Transverse colon (tissue), 4 donors: ENCODE measurements at regions of chr12 and their contacts with region 1.

Region 1: GRCh38 chr12:59403259-59403932 is 192.4 kb upstream of the SLC16A7 start:
- DNase-seq: peak; percentile 21
- H3K4me3 ChIP-seq: no peak overlapping the region
- H3K27ac ChIP-seq: no peak overlapping the region
- H3K4me1 ChIP-seq: peaks cover 0 to 4% (median 0%) of the 10 kb centered on the region in 4 donors
- H3K27me3 ChIP-seq: no peaks in the 10 kb centered on the region
- CTCF ChIP-seq: peak; percentile 44 to 65 (median 61)
- EP300 ChIP-seq: no peak
- POLR2A ChIP-seq: no peak

Region 2: DNA sequence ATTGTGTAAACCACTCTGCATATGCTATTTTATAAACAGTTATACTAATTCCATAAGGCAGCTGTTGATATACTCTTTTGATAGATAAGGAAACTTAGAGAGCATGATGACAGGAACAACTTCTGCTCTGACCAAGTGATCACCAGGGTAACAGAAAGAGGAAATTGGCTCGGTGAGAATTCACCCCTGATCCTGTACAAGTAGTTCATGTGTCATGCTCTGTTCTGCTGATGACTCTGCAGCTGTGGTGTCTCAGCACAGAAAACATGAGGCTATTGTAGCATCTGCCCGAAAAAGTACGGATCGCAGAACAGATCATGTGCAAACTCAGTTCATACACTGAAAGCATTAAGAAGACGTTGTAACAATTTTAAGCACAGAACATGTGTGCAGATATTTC is 828.1 kb before region 1 on chr12:
- in situ Hi-C with region 1: no loop called
- intact Hi-C with region 1: no loop called
- DNase-seq: no peak
- H3K4me3 ChIP-seq: no peak overlapping the region
- H3K27ac ChIP-seq: peak overlapping the region in 1 of 4 donors; percentile 37
- H3K4me1 ChIP-seq: no peaks in the 10 kb centered on the region
- H3K27me3 ChIP-seq: no peaks in the 10 kb centered on the region
- CTCF ChIP-seq: no peak
- EP300 ChIP-seq: no peak
- POLR2A ChIP-seq: no peak

Region 3: DNA sequence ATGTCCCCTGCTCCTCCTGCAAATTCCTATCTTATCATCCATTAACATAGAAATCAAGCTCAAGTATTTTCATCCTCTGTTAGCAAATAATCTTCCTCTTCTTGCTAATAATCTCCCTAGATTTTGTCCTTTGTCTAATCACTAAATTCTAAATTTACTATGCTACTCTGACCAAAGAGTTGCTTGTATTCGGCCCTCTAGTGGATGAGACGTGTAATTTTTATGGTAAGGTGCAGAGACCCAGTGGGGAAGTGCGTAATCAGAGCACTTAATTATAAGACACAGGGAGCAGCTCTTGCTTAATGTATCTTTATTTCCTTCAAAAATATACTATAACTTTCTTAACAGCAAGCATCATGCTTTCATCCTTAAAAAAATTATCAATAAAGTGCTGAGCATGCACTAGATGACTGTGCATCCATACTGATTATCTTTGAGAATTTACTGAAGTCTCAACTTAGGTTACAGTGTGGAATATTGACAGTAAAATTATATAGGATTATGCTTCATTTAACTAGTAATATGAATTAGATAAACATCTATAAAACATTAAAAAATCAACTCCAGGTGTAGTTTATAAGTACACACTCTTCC is 405.0 kb after region 1 on chr12:
- in situ Hi-C with region 1: loop called in 2 of 4 experiments (anchors 10 to 25 kb)
- intact Hi-C with region 1: no loop called
- DNase-seq: no peak
- H3K4me3 ChIP-seq: no peak overlapping the region
- H3K27ac ChIP-seq: no peak overlapping the region
- H3K4me1 ChIP-seq: no peaks in the 10 kb centered on the region
- H3K27me3 ChIP-seq: no peaks in the 10 kb centered on the region
- CTCF ChIP-seq: peak; percentile 51 to 67 (median 61)
- EP300 ChIP-seq: no peak
- POLR2A ChIP-seq: no peak

Region 4: DNA sequence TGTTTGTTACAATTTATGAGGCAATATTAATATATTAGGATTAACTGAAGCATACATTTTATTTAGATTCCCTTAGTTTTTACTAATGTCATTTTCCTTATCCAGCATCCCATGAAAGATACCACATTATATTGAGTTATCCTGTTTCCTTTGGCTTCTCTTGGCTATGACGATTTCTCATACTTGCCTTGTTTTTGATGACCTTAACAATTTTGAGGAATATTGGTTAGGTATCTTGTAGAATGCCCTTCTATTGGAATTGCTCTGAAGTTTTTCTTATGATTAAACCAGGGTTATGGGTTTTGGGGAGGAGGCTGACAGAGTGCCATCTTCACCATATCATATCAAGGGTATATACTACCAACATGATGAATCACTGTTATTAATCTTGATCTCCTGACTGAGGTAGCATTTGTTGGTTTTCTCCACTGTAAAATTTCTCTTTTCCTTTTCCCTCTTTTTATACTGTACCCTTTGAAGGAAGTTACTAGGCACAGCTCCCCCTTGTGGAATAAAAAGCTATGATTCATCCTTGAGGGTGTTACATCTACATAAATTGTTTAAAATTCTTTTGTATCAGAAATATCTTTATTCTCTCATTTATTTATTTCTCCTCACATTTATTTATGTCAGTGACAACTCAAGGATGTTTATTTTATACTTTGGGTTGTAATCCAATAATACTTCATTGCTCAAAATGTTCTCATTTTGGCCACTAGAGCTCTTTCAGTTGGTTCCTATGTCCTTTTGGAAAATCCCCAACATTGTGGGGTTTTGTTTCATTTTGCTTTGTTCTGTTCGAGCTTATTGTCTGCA is 431.5 kb after region 1 on chr12:
- in situ Hi-C with region 1: loop called in 1 of 4 experiments (anchors 25 kb)
- intact Hi-C with region 1: no loop called
- DNase-seq: no peak
- H3K4me3 ChIP-seq: no peak overlapping the region
- H3K27ac ChIP-seq: no peak overlapping the region
- H3K4me1 ChIP-seq: no peaks in the 10 kb centered on the region
- H3K27me3 ChIP-seq: no peaks in the 10 kb centered on the region
- CTCF ChIP-seq: peak; percentile 28 to 55 (median 38)
- EP300 ChIP-seq: no peak
- POLR2A ChIP-seq: no peak